ENCODE measurements at regions of chr13 and their contacts with region 1.

Region 1: DNA sequence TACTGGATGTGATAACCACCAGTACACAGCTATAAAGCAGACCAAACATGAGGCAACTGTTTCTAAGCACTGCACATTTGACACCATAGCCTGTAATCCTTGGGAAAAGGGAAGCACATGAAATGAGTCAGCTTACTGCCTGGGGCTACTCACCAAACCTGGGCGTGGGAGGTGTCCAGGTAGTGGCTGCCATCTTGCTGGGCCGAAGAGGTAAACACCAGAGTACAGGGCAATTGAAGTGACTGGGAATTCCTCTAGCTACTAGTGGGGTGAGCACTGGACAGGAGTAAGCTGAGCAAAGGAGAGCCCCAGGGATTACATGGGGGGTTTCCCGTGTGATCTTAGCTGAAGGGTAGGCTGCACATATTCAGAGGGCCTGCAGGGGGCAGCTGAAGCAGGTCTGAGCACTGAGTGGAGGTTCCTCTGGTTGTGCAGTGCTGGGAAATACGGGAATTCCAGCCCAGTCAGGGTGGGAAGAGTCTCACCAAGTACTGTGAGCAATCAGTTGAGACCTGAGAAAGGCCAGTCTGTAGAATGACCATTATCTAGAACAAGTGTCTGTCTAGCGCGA is 140.5 kb downstream of the SLC7A1 start:
- DNase-seq: peak; percentile 95
- H3K4me3 ChIP-seq: no peak overlapping the region
- H3K27ac ChIP-seq: no peak overlapping the region
- H3K4me1 ChIP-seq: peaks cover 51% of the 10 kb centered on the region
- H3K27me3 ChIP-seq: no peaks in the 10 kb centered on the region
- CTCF ChIP-seq: peak; percentile 37 to 45

Region 2: DNA sequence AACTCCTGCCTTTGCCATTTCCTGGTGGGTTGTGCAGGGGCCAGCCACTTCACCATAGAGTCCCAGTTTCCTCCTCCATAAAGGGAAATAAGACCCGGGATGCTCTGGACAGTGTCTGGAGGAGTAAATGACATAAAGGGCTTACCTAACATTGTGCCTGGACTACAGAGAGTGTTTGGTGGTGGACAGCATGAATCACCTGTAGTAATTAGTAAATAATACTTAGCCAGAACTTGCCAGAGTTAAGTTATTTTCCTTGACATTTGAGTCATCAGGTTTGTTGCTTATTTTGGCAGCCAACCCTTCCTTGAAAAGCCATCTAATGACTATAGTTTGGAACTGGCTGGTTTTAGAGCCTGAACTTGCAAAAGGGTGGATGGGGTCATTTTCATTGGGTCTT is 18.7 kb before region 1 on chr13:
- CTCF ChIA-PET with region 1: no interaction called
- dilution Hi-C with region 1: no loop called
- in situ Hi-C with region 1: no loop called
- intact Hi-C with region 1: loop called (anchors 2 kb)
- DNase-seq: peak; percentile 86
- H3K4me3 ChIP-seq: no peak overlapping the region
- H3K27ac ChIP-seq: no peak overlapping the region
- H3K4me1 ChIP-seq: peaks cover 23% of the 10 kb centered on the region
- H3K27me3 ChIP-seq: no peaks in the 10 kb centered on the region
- CTCF ChIP-seq: no peak